Naive thymus-derived CD8-positive, alpha-beta T cell (primary cell): ENCODE measurements at regions of chr19 and their contacts with region 1.

Region 1: DNA sequence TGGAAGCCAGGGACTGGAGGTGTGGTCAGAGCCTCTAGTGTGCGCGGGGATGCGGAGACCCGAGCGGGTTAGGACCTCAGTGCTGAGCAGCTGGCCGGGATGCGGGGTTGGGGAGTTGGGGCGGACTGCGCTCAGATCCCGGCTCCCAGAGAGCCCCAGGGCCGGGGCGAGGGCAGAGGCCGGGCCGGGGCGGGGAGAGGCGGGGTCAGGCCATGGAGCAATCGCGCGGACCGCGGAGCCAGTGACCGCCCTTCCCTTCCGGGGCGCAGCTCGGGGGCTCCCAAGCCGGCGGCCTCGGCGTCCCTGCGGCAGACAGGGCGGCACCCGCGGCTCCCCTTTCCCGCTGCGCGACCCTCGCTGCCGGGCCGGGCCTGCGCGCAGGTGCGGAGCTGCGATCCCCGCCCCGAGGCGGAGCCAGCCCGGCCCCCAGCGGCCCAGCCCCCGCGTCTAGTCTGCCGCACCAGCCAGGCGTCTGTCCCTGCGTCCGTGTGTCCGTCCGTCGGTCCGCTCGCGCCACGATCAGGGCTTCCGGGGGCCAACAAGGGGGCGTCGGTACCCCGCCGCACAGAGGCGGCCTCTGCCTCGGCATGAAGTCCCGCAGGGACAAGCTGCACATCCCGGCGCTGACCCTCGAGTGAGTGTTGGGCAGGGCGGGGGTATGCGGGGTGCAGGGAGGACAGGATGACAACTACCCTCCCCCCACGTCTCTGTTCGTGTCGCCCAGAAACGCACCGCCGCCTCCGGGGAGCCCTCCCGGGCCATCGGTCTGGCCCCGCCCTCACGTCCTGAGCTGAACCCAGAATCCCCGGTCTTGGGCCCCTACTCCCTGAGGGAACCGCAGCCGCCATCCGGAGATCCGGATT is 12.4 kb downstream of the MAST3 start:
- DNase-seq: peak in 7 of 10 donors; percentile 18 to 59 (median 43)
- ATAC-seq: peak; percentile 76 to 84
- H3K4me3 Mint-ChIP-seq: peak overlapping the region; percentile 73 to 93 (median 86)
- H3K27ac Mint-ChIP-seq: peak overlapping the region; percentile 69 to 97 (median 91)
- H3K4me1 Mint-ChIP-seq: peaks cover 13 to 45% (median 29%) of the 10 kb centered on the region in 4 donors
- H3K27me3 Mint-ChIP-seq: no peaks in the 10 kb centered on the region

Region 2: DNA sequence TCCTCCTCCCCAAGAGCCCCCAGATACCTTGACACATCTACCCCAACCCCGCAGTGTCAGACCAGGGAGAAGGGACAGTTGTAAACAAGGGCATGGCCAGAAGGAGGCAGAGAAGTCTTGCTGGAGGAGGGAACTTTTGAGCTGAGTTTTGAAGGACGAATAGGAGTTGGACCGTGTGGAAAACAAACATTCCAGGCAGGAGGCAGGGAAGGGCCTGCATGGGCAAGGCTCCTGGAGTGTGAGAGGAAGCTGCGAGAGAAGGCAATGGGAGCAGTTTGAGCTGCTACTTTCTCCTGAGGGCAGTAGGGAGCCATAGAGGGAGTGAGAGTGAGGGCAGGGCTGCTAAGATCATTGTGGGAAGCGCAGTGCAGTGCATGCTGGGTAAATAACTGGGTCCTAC is 46.5 kb before region 1 on chr19:
- POLR2A ChIA-PET with region 1: interaction called, 17 read pairs
- DNase-seq: peak in 5 of 10 donors; percentile 22 to 76 (median 37)
- ATAC-seq: peak in 1 of 2 donors; percentile 41
- H3K4me3 Mint-ChIP-seq: no peak overlapping the region
- H3K27ac Mint-ChIP-seq: peak overlapping the region in 3 of 10 donors; percentile 10 to 77 (median 33)
- H3K4me1 Mint-ChIP-seq: peaks cover 3 to 6% (median 4%) of the 10 kb centered on the region in 4 donors
- H3K27me3 Mint-ChIP-seq: no peaks in the 10 kb centered on the region

Region 3: GRCh38 chr19:18097217-18097992 is 12.6 kb before region 1 on chr19 and contains the start of gene MAST3:
- POLR2A ChIA-PET with region 1: interaction called, 135 read pairs
- DNase-seq: peak; percentile 83 to 95 (median 92)
- ATAC-seq: peak; percentile 87 to 92
- H3K4me3 Mint-ChIP-seq: peak within 1 kb of the TSS; percentile 82 to 96 (median 88)
- H3K27ac Mint-ChIP-seq: peak within 1 kb of the TSS; percentile 74 to 94 (median 86)
- H3K4me1 Mint-ChIP-seq: peaks cover 21 to 51% (median 40%) of the 10 kb centered on the region in 4 donors
- H3K27me3 Mint-ChIP-seq: no peaks in the 10 kb centered on the region
- polyA plus RNA-seq, gene MAST3: 9.4 to 15.7 (median 11.5) TPM

Region 4: DNA sequence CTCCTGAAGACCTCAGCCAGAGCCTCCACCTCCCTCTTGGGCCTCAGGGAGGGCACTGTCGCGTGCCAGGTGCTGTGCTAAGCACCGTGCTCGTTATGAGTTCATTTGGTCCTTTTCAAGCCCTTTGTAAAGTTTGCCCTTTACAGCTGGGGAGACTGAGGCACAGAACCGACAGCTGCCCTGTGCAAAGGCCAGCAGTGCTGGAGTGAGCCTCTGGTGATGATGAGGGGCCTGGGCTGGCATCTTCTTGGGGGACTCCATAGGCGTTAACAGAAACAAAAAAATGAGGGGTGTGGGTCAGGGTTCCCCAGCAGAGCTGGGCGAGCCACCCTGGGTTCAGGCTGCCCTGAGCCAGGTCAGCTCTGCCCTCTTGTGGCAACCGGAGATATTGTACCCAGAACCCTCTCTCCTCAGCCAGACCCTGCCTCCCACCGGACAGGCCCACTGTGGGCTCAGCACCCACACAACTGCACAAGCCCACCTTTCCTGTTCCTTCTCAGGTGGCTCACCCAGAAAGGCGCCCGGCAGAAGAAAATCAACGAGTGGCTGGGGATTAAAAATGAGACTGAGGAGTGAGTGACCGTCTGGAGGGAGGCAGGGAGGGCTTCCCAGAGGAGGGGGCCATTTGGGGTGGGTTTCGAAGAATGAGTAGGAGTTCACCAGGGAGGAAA is 58.1 kb after region 1 on chr19:
- POLR2A ChIA-PET with region 1: no interaction called
- DNase-seq: peak; percentile 40 to 75 (median 59)
- ATAC-seq: peak; percentile 94 to 95
- H3K4me3 Mint-ChIP-seq: no peak overlapping the region
- H3K27ac Mint-ChIP-seq: peak overlapping the region in 5 of 10 donors; percentile 9 to 52 (median 34)
- H3K4me1 Mint-ChIP-seq: peaks cover 3 to 32% (median 5%) of the 10 kb centered on the region in 4 donors
- H3K27me3 Mint-ChIP-seq: no peaks in the 10 kb centered on the region

Region 5: GRCh38 chr19:18179957-18180356 is 70.0 kb after region 1 on chr19:
- POLR2A ChIA-PET with region 1: no interaction called
- DNase-seq: no peak
- ATAC-seq: no peak
- H3K4me3 Mint-ChIP-seq: no peak overlapping the region
- H3K27ac Mint-ChIP-seq: no peak overlapping the region
- H3K4me1 Mint-ChIP-seq: peaks cover 0 to 26% (median 3%) of the 10 kb centered on the region in 4 donors
- H3K27me3 Mint-ChIP-seq: peaks cover 0 to 3% (median 0%) of the 10 kb centered on the region in 5 donors

Region 6: GRCh38 chr19:18205200-18205892 is 95.4 kb after region 1 on chr19:
- POLR2A ChIA-PET with region 1: no interaction called
- DNase-seq: peak; percentile 26 to 81 (median 41)
- ATAC-seq: no peak
- H3K4me3 Mint-ChIP-seq: peak overlapping the region; percentile 91 to 98 (median 96)
- H3K27ac Mint-ChIP-seq: peak overlapping the region in 9 of 10 donors; percentile 74 to 99 (median 97)
- H3K4me1 Mint-ChIP-seq: peaks cover 11 to 29% (median 27%) of the 10 kb centered on the region in 4 donors
- H3K27me3 Mint-ChIP-seq: peaks cover 0 to 10% (median 6%) of the 10 kb centered on the region in 5 donors